Dendritic cell treated with granulocyte-macrophage colony-stimulating factor and Interleukin-4, amounts not matched to agents 40 ng/mL and 50 ng/mL, for 4 days (primary cell): ENCODE measurements at regions of chr7 and their contacts with region 1.

Region 1: GRCh38 chr7:2844165-2844898 is at the start of gene GNA12:
- H3K4me3 Mint-ChIP-seq: peak within 1 kb of the TSS; percentile 86
- H3K27ac Mint-ChIP-seq: peak within 1 kb of the TSS; percentile 81
- H3K4me1 Mint-ChIP-seq: peaks cover 41% of the 10 kb centered on the region
- H3K27me3 Mint-ChIP-seq: no peaks in the 10 kb centered on the region

Region 2: GRCh38 chr7:2785071-2785500 is 59.2 kb before region 1 on chr7:
- intact Hi-C with region 1: loop called (anchors 10 kb)
- H3K4me3 Mint-ChIP-seq: no peak overlapping the region
- H3K27ac Mint-ChIP-seq: no peak overlapping the region
- H3K4me1 Mint-ChIP-seq: peaks cover 41% of the 10 kb centered on the region
- H3K27me3 Mint-ChIP-seq: no peaks in the 10 kb centered on the region

Region 3: DNA sequence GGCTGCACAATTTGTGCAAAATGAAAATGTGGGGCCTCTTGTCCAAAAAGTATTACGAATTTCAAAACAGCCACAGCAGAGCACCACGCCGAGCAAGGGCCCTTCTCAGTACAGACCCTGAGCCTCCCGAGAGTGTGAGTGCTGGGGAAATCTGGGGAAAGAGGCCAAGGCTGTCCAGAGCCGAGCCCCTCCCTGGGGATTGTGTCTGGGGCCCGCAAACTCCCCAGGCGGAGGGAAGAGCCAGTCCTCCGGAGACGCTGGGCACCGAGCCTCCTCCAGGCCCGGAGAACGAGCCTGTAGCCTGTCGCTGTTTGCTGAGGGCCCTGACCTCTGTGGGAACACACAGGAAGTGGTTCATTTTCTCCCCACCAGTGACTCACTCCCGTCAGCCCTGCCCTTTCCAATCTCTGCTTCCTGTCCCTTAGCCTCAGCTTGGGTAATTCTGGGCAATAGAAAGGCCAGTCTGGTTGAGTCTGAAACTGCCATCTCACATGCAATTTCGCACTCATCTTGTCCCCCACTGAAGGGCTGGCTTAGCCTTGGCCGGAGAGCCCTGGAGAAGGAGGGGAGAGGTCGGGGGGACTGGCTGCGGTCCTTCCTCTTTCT is 19.2 kb after region 1 on chr7:
- intact Hi-C with region 1: loop called (anchors 1 kb)
- H3K4me3 Mint-ChIP-seq: peak overlapping the region; percentile 74
- H3K27ac Mint-ChIP-seq: peak overlapping the region; percentile 98
- H3K4me1 Mint-ChIP-seq: peaks cover 29% of the 10 kb centered on the region
- H3K27me3 Mint-ChIP-seq: peaks cover 34% of the 10 kb centered on the region

Region 4: DNA sequence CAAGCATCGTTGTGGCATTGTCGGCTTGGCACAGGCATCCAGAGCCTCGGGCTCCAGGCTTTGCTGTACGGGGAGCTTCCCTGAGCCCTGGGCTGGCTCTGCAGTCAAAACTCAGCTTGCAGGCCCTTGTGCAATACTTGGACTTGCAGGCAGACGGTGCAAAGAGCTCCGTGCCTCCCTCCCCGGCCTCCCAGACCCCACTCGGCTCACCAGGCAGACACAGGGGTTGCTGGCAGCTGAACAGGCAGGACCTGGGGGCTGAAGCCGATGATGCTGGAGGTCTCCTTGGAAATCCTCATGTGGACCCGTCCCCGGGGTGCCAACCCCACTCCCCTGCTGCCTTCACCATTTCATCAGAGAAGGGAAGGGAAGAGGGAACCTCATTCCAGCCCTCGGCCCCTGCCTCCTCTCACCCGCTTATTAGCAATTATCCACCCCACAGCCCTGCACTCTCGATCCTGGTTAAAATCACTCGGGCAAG is 59.4 kb after region 1 on chr7:
- intact Hi-C with region 1: no loop called
- H3K4me3 Mint-ChIP-seq: no peak overlapping the region
- H3K27ac Mint-ChIP-seq: no peak overlapping the region
- H3K4me1 Mint-ChIP-seq: no peaks in the 10 kb centered on the region
- H3K27me3 Mint-ChIP-seq: no peaks in the 10 kb centered on the region

Region 5: GRCh38 chr7:2939193-2939885 is 95.0 kb after region 1 on chr7:
- intact Hi-C with region 1: no loop called
- H3K4me3 Mint-ChIP-seq: no peak overlapping the region
- H3K27ac Mint-ChIP-seq: peak overlapping the region; percentile 83
- H3K4me1 Mint-ChIP-seq: peaks cover 53% of the 10 kb centered on the region
- H3K27me3 Mint-ChIP-seq: peaks cover 8% of the 10 kb centered on the region